ENCODE measurements at regions of chr1 and their contacts with region 1.

Region 1: GRCh38 chr1:17274186-17275170 is 25.6 kb downstream of the PADI3 start:
- DNase-seq: peak; percentile 69 to 76
- ATAC-seq: peak; percentile 76 to 92; a peak in 5 of 6 replicates
- H3K4me3 ChIP-seq: no peak overlapping the region
- H3K27ac ChIP-seq: peak overlapping the region; percentile 49 to 86; a peak in 5 of 6 replicates
- H3K4me1 ChIP-seq: peaks cover 51% of the 10 kb centered on the region
- CTCF ChIP-seq: peak; percentile 57
- EP300 ChIP-seq: no peak
- POLR2A ChIP-seq: no peak
- RAD21 ChIP-seq: peak; percentile 69 to 83

Region 2: GRCh38 chr1:17244816-17245740 is 29.4 kb before region 1 on chr1:
- CTCF ChIA-PET with region 1: interaction called, 17 read pairs
- POLR2A ChIA-PET with region 1: no interaction called
- DNase-seq: no peak
- ATAC-seq: no peak
- H3K4me3 ChIP-seq: no peak overlapping the region
- H3K27ac ChIP-seq: peak overlapping the region in 1 of 2 experiments; percentile 66; a peak in 3 of 6 replicates
- H3K4me1 ChIP-seq: peaks cover 10% of the 10 kb centered on the region
- CTCF ChIP-seq: no peak
- EP300 ChIP-seq: no peak
- POLR2A ChIP-seq: no peak
- RAD21 ChIP-seq: no peak

Region 3: DNA sequence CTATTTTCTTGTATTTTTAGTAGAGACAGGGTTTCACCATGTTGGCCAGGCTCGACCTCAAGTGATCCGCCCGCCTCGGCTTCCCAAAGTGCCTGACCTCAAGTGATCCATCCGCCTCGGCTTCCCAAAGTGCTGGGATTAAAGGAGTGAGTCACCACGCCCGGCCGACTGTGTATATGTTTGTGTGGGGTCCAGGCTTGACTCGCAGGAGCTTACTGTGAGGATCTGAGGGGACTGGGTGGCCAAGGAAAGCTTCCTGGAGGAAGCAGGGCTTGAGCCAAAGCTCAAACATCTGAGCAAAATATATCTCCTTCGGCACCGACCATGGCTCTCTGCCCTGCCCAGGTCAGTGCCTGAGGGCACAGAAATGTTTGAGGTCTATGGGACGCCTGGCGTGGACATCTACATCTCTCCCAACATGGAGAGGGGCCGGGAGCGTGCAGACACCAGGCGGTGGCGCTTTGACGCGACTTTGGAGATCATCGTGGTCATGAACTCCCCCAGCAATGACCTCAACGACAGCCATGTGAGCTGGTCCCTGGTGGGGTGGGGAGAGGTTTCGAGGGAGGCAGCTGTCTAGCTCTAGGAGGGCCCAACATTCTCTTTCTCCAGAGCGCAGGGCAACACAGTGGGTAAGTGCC is 15.1 kb before region 1 on chr1:
- CTCF ChIA-PET with region 1: interaction called, 29 read pairs
- POLR2A ChIA-PET with region 1: no interaction called
- DNase-seq: no peak
- ATAC-seq: peak in 1 of 2 experiments; percentile 51; a peak in 2 of 6 replicates
- H3K4me3 ChIP-seq: no peak overlapping the region
- H3K27ac ChIP-seq: peak overlapping the region; percentile 49 to 84; a peak in 5 of 6 replicates
- H3K4me1 ChIP-seq: peaks cover 21% of the 10 kb centered on the region
- CTCF ChIP-seq: no peak
- EP300 ChIP-seq: no peak
- POLR2A ChIP-seq: no peak
- RAD21 ChIP-seq: no peak

Region 4: GRCh38 chr1:17287130-17287776 is 12.8 kb after region 1 on chr1:
- CTCF ChIA-PET with region 1: interaction called, 23 read pairs
- POLR2A ChIA-PET with region 1: interaction called, 4 read pairs
- DNase-seq: peak; percentile 63 to 75
- ATAC-seq: peak; percentile 89 to 96
- H3K4me3 ChIP-seq: no peak overlapping the region
- H3K27ac ChIP-seq: peak overlapping the region; percentile 77 to 89
- H3K4me1 ChIP-seq: peaks cover 48% of the 10 kb centered on the region
- CTCF ChIP-seq: no peak
- EP300 ChIP-seq: peak; percentile 84 to 87; a peak in 4 of 5 replicates
- POLR2A ChIP-seq: no peak
- RAD21 ChIP-seq: peak; percentile 21 to 45; a peak in 3 of 5 replicates

Region 5: GRCh38 chr1:17381161-17381560 is 106.7 kb after region 1 on chr1:
- CTCF ChIA-PET with region 1: no interaction called
- POLR2A ChIA-PET with region 1: no interaction called
- DNase-seq: no peak
- ATAC-seq: no peak
- H3K4me3 ChIP-seq: no peak overlapping the region
- H3K27ac ChIP-seq: no peak overlapping the region
- H3K4me1 ChIP-seq: no peaks in the 10 kb centered on the region
- CTCF ChIP-seq: no peak
- EP300 ChIP-seq: no peak
- POLR2A ChIP-seq: no peak
- RAD21 ChIP-seq: no peak

Region 6: GRCh38 chr1:17531682-17532487 is 257.4 kb after region 1 on chr1:
- CTCF ChIA-PET with region 1: no interaction called
- POLR2A ChIA-PET with region 1: no interaction called
- DNase-seq: no peak
- ATAC-seq: peak; percentile 36 to 45; a peak in 5 of 6 replicates
- H3K4me3 ChIP-seq: no peak overlapping the region
- H3K27ac ChIP-seq: peak overlapping the region in 1 of 2 experiments; percentile 36; a peak in 1 of 6 replicates
- H3K4me1 ChIP-seq: peaks cover 10% of the 10 kb centered on the region; the same call in 2 of the 3 replicates
- CTCF ChIP-seq: no peak
- EP300 ChIP-seq: no peak
- POLR2A ChIP-seq: no peak
- RAD21 ChIP-seq: no peak

Measured in A549 (cell line).